ENCODE measurements at regions of chr22 and their contacts with region 1.

Region 1: DNA sequence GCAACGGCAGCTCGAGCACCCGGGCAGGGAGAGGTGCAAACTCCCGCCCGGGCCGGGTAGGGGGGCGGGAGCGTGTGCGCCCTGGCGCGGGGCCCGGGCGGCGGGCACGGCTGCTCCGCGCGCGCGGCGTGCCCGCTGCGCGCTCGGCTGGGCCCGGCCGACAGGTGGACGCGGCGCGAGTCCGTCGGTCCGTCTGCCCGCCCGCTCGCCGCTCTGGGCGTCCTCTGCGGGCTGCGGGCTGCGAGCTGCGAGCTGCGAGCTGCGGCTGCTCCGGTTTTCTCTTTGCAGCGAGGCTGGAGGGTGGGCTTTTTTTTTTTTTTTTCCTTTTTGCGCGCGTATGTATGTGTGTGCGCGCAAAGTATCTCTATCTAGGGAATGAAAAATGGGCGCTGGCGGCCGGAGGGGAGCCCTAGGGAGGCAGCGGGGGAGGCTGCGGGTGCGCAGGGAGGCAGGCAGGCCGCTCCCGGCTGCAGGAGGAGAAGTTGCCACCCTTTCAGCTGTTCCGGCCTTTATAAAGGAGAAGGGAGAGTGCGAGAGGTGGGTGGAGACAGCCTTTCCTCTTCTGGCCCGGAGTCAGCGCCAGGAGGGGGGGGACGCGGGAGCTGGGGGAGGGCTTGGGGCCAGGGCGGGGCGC is at the start of gene PDGFB:
- DNase-seq: peak in 1 of 2 donors; percentile 55
- ATAC-seq: peak in 1 of 3 donors; percentile 23
- H3K4me3 ChIP-seq: peak within 1 kb of the TSS; percentile 6
- H3K4me3 Mint-ChIP-seq: peak within 1 kb of the TSS; percentile 85
- H3K27ac ChIP-seq: no peak within 1 kb of the TSS
- H3K27ac Mint-ChIP-seq: no peak within 1 kb of the TSS
- H3K4me1 ChIP-seq: peaks cover 52% of the 10 kb centered on the region
- H3K4me1 Mint-ChIP-seq: peaks cover 27 to 42% of the 10 kb centered on the region in 2 donors
- H3K27me3 ChIP-seq: peaks cover 54% of the 10 kb centered on the region
- H3K27me3 Mint-ChIP-seq: peaks cover 36 to 61% of the 10 kb centered on the region in 2 donors
- CTCF ChIP-seq: no peak
- total RNA-seq, gene PDGFB: 0.28 to 1.2 (median 0.31) TPM

Region 2: DNA sequence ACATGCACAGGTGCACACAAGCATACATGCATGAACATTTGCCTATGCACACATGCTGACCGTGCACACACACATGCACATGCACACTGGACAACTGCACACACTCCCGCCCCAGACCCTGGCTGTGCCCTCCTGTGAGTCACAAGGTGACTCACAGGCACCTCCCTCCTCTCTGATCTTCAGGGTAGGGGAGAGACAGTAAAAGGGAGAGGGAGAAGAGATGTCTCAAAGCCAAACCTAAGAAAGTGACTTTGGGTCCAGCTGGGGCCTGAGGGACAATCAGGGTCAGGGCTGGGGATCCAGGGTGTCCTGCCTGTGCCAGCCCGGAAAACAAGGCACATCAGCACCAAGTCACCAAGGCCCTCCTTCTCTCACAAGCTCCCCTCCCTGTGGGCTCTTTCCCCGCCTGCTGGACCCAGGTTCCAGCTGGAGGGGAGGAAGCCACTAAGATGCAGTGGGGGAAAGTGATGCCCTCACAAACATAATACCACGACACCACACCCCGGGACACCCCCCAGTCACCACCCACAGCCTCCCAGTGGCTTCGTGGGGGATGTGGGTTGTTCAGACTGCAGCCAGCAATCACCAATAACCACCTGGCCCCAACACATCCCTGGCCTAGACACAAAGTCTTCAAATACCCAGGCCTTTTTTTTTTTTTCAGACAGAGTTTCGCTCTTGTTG is 39.1 kb before region 1 on chr22:
- intact Hi-C with region 1: loop called (anchors 5 kb)
- DNase-seq: peak; percentile 63 to 76
- ATAC-seq: peak; percentile 84 to 95 (median 85)
- H3K4me3 ChIP-seq: no peak overlapping the region
- H3K4me3 Mint-ChIP-seq: no peak overlapping the region
- H3K27ac ChIP-seq: peak overlapping the region; percentile 72
- H3K27ac Mint-ChIP-seq: peak overlapping the region in 1 of 2 donors; percentile 91
- H3K4me1 ChIP-seq: peaks cover 30% of the 10 kb centered on the region
- H3K4me1 Mint-ChIP-seq: peaks cover 7 to 42% of the 10 kb centered on the region in 2 donors
- H3K27me3 ChIP-seq: no peaks in the 10 kb centered on the region
- H3K27me3 Mint-ChIP-seq: peaks cover 0 to 15% of the 10 kb centered on the region in 2 donors
- CTCF ChIP-seq: no peak